Naive thymus-derived CD4-positive, alpha-beta T cell (primary cell): ENCODE measurements at regions of chr4 and their contacts with region 1.

Region 1: GRCh38 chr4:48141048-48141447 is 7.0 kb upstream of the TXK start:
- DNase-seq: peak in 7 of 9 donors; percentile 16 to 72 (median 49)
- ATAC-seq: peak; percentile 67
- H3K4me3 ChIP-seq: no peak overlapping the region
- H3K4me3 Mint-ChIP-seq: peak overlapping the region in 1 of 10 donors; percentile 4
- H3K27ac ChIP-seq: no peak overlapping the region
- H3K27ac Mint-ChIP-seq: peak overlapping the region in 6 of 9 donors; percentile 6 to 97 (median 44)
- H3K4me1 ChIP-seq: peaks cover 36 to 46% of the 10 kb centered on the region in 2 donors
- H3K4me1 Mint-ChIP-seq: peaks cover 34 to 53% (median 51%) of the 10 kb centered on the region in 7 donors
- H3K27me3 ChIP-seq: no peaks in the 10 kb centered on the region
- H3K27me3 Mint-ChIP-seq: no peaks in the 10 kb centered on the region

Region 2: DNA sequence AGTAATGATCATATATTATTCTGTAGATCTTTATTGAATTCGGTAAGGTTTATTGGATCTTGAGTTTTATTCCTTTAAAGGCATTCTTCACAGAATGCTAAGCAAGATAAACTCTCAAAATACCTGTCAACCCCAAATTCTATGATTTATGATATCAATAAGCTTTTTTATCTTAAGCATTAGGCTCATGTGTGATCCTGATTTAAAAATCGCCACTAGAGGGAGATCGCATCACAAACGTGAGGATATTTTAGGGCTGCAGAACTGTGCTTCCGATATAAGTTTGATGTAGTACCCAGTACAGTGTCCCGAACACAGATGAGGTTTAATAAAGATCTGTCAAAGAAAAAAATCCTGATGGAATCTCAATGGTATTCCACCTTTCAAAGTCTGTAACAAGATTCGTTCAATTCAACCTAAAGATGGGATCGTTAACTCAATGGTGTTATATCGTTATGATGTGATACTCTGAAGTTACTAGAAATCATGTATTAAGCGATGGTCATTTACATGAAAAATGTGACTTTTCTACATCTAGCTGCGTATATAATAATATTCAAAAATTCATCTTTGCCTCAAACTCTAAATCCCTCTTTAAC is 472.1 kb before region 1 on chr4:
- CTCF ChIA-PET with region 1: no interaction called
- POLR2A ChIA-PET with region 1: no interaction called
- intact Hi-C with region 1: loop called in 1 of 2 experiments (anchors 2 kb)
- DNase-seq: peak in 6 of 9 donors; percentile 13 to 40 (median 37)
- ATAC-seq: no peak
- H3K4me3 ChIP-seq: no peak overlapping the region
- H3K4me3 Mint-ChIP-seq: no peak overlapping the region
- H3K27ac ChIP-seq: no peak overlapping the region
- H3K27ac Mint-ChIP-seq: no peak overlapping the region
- H3K4me1 ChIP-seq: no peaks in the 10 kb centered on the region
- H3K4me1 Mint-ChIP-seq: no peaks in the 10 kb centered on the region
- H3K27me3 ChIP-seq: no peaks in the 10 kb centered on the region
- H3K27me3 Mint-ChIP-seq: peaks cover 7 to 34% (median 24%) of the 10 kb centered on the region in 5 donors

Region 3: DNA sequence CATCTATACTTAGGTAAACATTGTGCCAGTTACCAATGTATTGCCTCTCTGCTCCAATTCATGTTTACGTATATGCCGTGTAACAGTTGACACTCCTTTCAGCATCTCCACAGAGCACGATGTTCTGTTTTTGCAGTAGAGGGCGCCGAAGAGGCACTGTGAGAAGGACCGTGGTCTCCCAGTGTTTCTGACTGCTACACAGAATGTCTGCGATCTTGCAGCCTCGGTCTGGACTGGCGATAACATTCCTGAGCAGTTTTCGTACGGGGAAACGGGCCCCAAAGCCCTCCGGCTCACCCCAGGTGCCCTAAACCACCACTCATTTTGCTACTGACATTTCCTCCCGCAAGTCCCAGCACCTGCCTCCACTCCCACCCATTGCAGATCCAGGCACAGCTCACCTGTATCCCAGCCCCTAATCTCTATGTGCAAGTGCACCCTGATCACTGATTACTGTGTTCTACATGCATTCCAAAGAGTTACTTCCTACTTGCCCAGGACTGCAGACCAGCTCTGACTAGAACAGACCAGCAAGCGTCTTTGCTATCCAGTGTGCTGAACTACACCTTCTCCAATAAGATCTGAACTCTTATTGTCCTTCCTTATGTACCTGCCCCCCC is 214.3 kb before region 1 on chr4:
- CTCF ChIA-PET with region 1: no interaction called
- POLR2A ChIA-PET with region 1: no interaction called
- intact Hi-C with region 1: loop called (anchors 1 kb)
- DNase-seq: peak in 7 of 9 donors; percentile 15 to 55 (median 44)
- ATAC-seq: peak; percentile 95
- H3K4me3 ChIP-seq: peak overlapping the region; percentile 6
- H3K4me3 Mint-ChIP-seq: peak overlapping the region in 9 of 10 donors; percentile 25 to 70 (median 63)
- H3K27ac ChIP-seq: no peak overlapping the region
- H3K27ac Mint-ChIP-seq: no peak overlapping the region
- H3K4me1 ChIP-seq: no peaks in the 10 kb centered on the region
- H3K4me1 Mint-ChIP-seq: peaks cover 5 to 9% (median 7%) of the 10 kb centered on the region in 7 donors
- H3K27me3 ChIP-seq: no peaks in the 10 kb centered on the region
- H3K27me3 Mint-ChIP-seq: peaks cover 12 to 41% (median 22%) of the 10 kb centered on the region in 5 donors

Region 4: GRCh38 chr4:48033825-48034413 is 107.1 kb before region 1 on chr4:
- CTCF ChIA-PET with region 1: interaction called, 31 read pairs
- POLR2A ChIA-PET with region 1: interaction called, 4 read pairs
- intact Hi-C with region 1: loop called (anchors 1 kb)
- DNase-seq: peak in 7 of 9 donors; percentile 21 to 55 (median 52)
- ATAC-seq: peak; percentile 91
- H3K4me3 ChIP-seq: no peak overlapping the region
- H3K4me3 Mint-ChIP-seq: no peak overlapping the region
- H3K27ac ChIP-seq: no peak overlapping the region
- H3K27ac Mint-ChIP-seq: no peak overlapping the region
- H3K4me1 ChIP-seq: peaks cover 3 to 4% of the 10 kb centered on the region in 2 donors
- H3K4me1 Mint-ChIP-seq: peaks cover 4 to 22% (median 15%) of the 10 kb centered on the region in 7 donors
- H3K27me3 ChIP-seq: no peaks in the 10 kb centered on the region
- H3K27me3 Mint-ChIP-seq: no peaks in the 10 kb centered on the region

Region 5: GRCh38 chr4:48127682-48128394 is 13.2 kb before region 1 on chr4:
- CTCF ChIA-PET with region 1: interaction called, 127 read pairs
- POLR2A ChIA-PET with region 1: interaction called, 184 read pairs
- intact Hi-C with region 1: loop called (anchors 1 kb)
- DNase-seq: peak; percentile 30 to 78 (median 71)
- ATAC-seq: peak; percentile 82
- H3K4me3 ChIP-seq: peak overlapping the region; percentile 52
- H3K4me3 Mint-ChIP-seq: peak overlapping the region in 9 of 10 donors; percentile 80 to 99 (median 91)
- H3K27ac ChIP-seq: peak overlapping the region; percentile 79
- H3K27ac Mint-ChIP-seq: peak overlapping the region in 7 of 9 donors; percentile 89 to 97 (median 95)
- H3K4me1 ChIP-seq: peaks cover 32 to 81% of the 10 kb centered on the region in 2 donors
- H3K4me1 Mint-ChIP-seq: peaks cover 0 to 89% (median 84%) of the 10 kb centered on the region in 7 donors
- H3K27me3 ChIP-seq: no peaks in the 10 kb centered on the region
- H3K27me3 Mint-ChIP-seq: no peaks in the 10 kb centered on the region

Region 6: DNA sequence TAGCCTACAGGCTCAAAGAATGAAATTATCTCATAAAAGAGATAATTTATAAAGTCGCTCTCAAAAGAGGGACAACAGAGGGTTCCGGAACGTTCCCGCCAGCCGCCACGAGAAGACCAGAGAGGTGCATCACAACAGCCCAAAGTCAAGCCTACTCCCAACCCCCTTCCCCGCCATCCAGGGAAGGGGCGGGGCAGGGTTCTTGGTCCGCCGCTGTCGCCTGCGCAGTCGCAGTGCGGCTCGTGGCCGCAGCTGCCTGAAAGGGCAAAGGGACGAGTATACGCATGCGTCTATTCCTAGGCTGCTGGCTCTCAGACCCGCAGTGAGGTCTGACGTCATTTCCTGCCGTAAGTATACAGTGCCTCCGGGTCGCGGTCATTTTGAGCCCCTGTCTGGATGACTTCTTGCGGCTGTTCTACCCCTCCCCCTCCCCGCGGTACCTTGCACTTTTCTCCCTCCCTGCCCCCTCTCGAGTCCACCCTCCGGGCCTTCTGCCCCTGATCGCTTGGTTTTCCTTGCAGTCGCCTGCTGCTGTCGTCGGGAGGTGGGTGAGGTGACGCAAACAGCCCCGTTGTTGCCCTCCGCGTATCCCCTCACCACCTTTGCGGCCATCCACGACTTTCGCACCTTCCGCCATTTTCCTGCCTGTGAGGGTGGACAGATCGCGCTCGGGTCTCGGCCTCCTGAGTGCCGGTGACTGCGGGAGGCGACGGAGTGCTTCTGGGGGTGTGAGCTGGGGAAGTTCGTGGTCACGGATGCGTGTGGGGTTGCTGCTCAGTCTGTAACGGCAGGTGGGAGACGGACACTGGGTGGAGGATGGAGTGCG is 689.9 kb after region 1 on chr4 and contains the start of gene OCIAD1:
- CTCF ChIA-PET with region 1: no interaction called
- POLR2A ChIA-PET with region 1: no interaction called
- intact Hi-C with region 1: loop called in 1 of 2 experiments (anchors 2 kb)
- DNase-seq: peak; percentile 80 to 98 (median 93)
- ATAC-seq: peak; percentile 98
- H3K4me3 ChIP-seq: peak within 1 kb of the TSS; percentile 98
- H3K4me3 Mint-ChIP-seq: peak within 1 kb of the TSS; percentile 96 to 100 (median 100)
- H3K27ac ChIP-seq: peak within 1 kb of the TSS; percentile 91
- H3K27ac Mint-ChIP-seq: peak within 1 kb of the TSS; percentile 98 to 100 (median 100)
- H3K4me1 ChIP-seq: peaks cover 10 to 12% of the 10 kb centered on the region in 2 donors
- H3K4me1 Mint-ChIP-seq: peaks cover 10 to 44% (median 36%) of the 10 kb centered on the region in 7 donors
- H3K27me3 ChIP-seq: no peaks in the 10 kb centered on the region
- H3K27me3 Mint-ChIP-seq: peaks cover 0 to 4% (median 4%) of the 10 kb centered on the region in 5 donors
- total RNA-seq, gene OCIAD1: 85.6 to 128 (median 102) TPM